AG04449 (cell line): ENCODE measurements at regions of chr20 and their contacts with region 1.

Region 1: DNA sequence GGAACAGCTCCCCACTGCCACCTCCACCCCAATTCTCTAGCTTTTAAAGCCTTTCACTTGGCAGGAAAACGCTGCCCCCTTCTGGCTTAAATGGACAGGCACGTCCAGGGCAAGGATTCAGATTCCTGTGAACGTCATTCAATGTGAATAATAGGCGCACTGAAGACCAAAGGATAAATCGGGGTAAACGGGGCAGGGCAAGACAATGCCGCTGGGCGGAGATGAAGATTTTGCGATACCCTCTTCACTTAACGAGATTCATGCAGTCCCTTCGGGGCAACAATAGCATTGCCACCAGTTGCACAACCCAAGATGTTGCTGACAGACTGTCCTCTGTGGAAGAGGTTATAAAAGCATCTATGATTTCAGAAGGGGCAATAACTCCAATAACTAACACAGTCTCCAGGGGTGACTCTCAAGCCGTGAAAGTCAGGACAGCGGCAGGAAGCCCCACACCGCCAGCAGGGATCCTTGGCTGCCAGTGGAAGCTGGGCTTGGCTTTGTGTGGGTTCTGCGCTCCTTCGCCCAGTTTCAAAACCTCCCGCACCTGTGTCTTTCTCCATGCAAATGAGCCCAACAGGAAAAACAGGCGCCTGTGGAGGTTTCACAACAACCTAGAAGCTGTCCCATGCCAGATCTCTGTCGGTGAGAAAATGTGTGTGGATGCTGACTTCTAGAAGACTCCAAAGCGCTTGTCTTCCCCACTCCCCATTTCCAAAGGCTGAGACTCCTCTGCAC is 291.8 kb downstream of the BMP7 start:
- DNase-seq: peak; percentile 7
- H3K4me3 ChIP-seq: no peak overlapping the region
- CTCF ChIP-seq: peak; percentile 80

Region 2: DNA sequence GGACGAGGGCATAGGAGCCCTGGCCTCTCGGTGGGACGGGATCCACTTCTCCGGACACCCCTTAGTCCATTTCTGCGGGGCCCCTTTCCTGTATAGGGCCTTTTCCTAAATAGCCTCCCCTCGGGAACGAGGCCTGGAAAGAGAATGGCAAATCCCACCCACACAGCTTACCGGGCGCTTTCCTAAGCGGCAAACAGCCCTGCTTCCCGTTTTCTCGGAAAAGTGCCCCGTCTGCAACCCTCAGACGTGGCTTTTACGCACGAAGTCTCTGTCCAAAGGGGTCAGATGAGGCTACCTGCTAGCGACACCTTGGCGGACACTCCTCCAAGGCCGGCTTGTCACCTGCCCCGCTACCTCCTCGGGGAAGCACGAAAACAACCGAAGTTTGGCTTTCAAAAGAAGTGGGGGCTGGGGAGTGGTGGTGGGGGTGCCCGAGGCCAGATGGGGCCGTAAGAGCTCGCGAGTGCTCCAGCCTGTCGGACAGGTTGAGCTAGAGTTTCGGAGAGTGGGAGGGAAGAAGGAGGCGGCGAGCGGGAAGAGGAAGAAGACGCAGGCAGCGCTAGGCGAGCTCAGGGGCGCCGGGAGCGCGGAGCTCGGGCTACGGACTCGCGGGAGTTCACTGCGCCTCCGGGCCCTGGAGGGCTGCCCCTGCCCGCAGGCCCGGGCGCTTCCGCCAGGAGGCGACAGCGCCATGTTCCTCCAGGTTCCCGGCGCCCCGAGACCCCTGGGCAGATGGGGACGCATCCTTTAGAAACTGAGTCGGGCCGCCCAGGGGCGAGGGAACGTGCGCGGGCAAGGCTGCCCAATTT is 344.8 kb before region 1 on chr20:
- CTCF ChIA-PET with region 1: interaction called, 33 read pairs
- POLR2A ChIA-PET with region 1: interaction called, 3 read pairs
- DNase-seq: peak; percentile 28
- H3K4me3 ChIP-seq: peak overlapping the region; percentile 78
- CTCF ChIP-seq: peak; percentile 87

Region 3: DNA sequence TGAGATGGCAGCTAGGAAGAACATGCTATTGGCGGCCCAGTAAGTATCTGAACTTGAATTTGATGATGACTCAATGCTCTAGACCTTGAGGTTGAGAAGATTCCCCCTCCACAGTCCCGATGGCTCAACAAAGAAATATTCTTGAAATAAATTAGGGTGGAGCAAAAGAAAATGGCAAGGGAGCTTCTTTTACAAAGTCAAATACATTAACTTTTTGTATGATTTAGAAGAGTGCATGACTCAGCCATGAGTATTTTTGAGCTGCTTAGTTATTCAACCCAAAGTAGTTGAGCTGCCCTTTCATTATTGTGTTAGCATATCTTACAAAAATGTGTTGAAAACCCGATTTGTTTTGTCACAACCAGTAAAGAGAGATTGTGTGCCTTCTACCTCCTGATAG is 338.0 kb before region 1 on chr20:
- CTCF ChIA-PET with region 1: interaction called, 12 read pairs
- POLR2A ChIA-PET with region 1: no interaction called
- DNase-seq: peak; percentile 65
- H3K4me3 ChIP-seq: no peak overlapping the region
- CTCF ChIP-seq: no peak

Region 4: DNA sequence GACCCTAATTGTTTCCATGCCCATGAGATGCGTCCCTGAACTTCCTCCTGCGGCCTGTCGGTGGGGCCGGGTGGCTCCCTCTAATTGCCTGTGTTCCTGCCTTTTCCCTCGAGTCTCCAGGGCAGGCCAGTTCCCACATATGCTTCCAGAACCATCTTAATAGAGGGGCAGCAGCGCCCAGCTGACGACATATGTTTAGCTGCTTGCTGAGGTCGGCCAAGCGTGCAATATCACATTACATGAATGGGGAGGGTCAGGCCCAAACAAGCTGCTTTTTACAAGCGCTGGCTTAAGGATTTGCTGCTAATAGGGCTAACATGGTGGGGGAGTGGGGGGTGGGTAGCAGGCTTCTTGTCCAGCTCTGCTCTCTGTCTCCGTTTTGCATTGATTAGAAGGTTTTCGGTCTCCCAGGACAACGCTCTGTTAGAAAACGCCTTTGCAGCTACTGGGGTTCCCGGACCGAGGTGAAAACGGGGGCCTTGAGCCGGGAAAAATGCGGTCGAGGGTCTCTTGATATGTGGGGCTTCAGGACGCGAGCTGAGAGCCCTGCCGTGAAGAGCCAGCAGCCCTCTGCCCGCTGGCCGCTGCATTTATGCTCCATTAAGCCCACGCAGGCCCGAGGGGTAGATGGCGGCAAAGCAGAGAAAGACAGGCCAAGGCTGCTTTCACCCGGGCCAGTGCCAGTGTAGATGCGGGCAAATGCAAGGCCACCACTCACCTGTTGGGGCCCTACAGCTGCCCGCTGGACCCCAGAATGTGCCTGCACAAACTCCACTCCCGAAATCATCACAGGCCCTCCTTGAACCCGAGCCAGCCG is 16.7 kb before region 1 on chr20:
- CTCF ChIA-PET with region 1: interaction called, 14 read pairs
- POLR2A ChIA-PET with region 1: no interaction called
- DNase-seq: no peak
- H3K4me3 ChIP-seq: no peak overlapping the region
- CTCF ChIP-seq: no peak

Region 5: GRCh38 chr20:56985286-56985685 is 10.6 kb after region 1 on chr20:
- CTCF ChIA-PET with region 1: interaction called, 35 read pairs
- POLR2A ChIA-PET with region 1: no interaction called
- DNase-seq: no peak
- H3K4me3 ChIP-seq: no peak overlapping the region
- CTCF ChIP-seq: no peak

Region 6: GRCh38 chr20:57013718-57014117 is 39.0 kb after region 1 on chr20:
- CTCF ChIA-PET with region 1: no interaction called
- POLR2A ChIA-PET with region 1: no interaction called
- DNase-seq: no peak
- H3K4me3 ChIP-seq: no peak overlapping the region
- CTCF ChIP-seq: no peak